Activated CD8-positive, alpha-beta T cell treated with anti-CD3 and anti-CD28 coated beads for 36 hours (primary cell): ENCODE measurements at regions of chr11 and their contacts with region 1.

Region 1: GRCh38 chr11:32792948-32793475 is 1.4 kb downstream of the CCDC73 start:
- DNase-seq: peak; percentile 83
- ATAC-seq: peak; percentile 74
- H3K4me3 Mint-ChIP-seq: no peak overlapping the region
- H3K27ac Mint-ChIP-seq: no peak overlapping the region
- H3K4me1 Mint-ChIP-seq: peaks cover 9% of the 10 kb centered on the region
- H3K27me3 Mint-ChIP-seq: peaks cover 8% of the 10 kb centered on the region
- CTCF ChIP-seq: peak; percentile 96

Region 2: GRCh38 chr11:32713496-32713895 is 79.5 kb before region 1 on chr11:
- CTCF ChIA-PET with region 1: interaction called, 5 read pairs
- POLR2A ChIA-PET with region 1: no interaction called
- intact Hi-C with region 1: loop called (anchors 5 kb)
- DNase-seq: peak; percentile 6
- ATAC-seq: no peak
- H3K4me3 Mint-ChIP-seq: no peak overlapping the region
- H3K27ac Mint-ChIP-seq: no peak overlapping the region
- H3K4me1 Mint-ChIP-seq: no peaks in the 10 kb centered on the region
- H3K27me3 Mint-ChIP-seq: peaks cover 18% of the 10 kb centered on the region
- CTCF ChIP-seq: peak; percentile 38

Region 3: GRCh38 chr11:33291004-33291777 is 498.2 kb after region 1 on chr11:
- CTCF ChIA-PET with region 1: no interaction called
- POLR2A ChIA-PET with region 1: no interaction called
- intact Hi-C with region 1: no loop called
- DNase-seq: no peak
- ATAC-seq: no peak
- H3K4me3 Mint-ChIP-seq: no peak overlapping the region
- H3K27ac Mint-ChIP-seq: no peak overlapping the region
- H3K4me1 Mint-ChIP-seq: peaks cover 38% of the 10 kb centered on the region
- H3K27me3 Mint-ChIP-seq: no peaks in the 10 kb centered on the region
- CTCF ChIP-seq: no peak